GM10248 (cell line): ENCODE measurements at regions of chr22 and their contacts with region 1.

Region 1: DNA sequence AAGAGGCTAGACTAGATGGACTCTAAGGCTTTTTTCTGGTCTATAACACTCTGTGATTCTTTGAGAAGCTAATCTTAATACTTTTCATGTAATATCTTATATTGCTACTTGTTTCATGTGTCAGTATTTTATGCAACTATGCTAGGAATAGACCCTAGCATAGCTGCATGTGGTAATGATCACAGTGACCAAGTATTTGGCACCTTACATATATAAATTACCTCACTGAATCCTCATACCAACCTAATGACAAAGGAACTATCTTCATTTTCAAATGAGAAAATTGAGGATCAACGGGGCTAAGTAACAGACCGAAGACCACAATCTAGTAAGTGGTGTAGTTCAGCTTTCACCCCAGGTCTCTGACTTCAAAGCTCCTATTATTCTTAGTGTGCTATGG is 327.3 kb upstream of the PITPNB start:
- DNase-seq: no peak
- CTCF ChIP-seq: no peak

Region 2: DNA sequence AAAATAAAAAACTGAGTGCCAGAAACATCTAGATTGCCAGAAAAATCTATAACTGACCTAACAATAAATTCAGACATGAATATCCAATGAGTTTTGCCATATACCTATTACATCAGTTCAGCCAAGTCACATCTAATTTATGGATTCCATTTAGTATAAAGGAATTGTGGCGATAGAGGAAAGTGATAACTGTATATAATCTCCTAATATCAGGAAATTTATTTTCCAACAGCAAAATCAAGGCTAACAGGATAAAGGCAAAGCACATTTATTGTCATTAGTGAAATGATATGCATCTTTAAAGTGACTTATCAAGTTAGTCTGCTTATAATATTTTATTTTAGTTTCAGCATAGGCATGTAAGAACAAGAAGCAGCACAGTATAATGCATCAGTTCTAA is 29.1 kb before region 1 on chr22:
- CTCF ChIA-PET with region 1: no interaction called
- POLR2A ChIA-PET with region 1: no interaction called
- DNase-seq: no peak
- CTCF ChIP-seq: no peak

Region 3: DNA sequence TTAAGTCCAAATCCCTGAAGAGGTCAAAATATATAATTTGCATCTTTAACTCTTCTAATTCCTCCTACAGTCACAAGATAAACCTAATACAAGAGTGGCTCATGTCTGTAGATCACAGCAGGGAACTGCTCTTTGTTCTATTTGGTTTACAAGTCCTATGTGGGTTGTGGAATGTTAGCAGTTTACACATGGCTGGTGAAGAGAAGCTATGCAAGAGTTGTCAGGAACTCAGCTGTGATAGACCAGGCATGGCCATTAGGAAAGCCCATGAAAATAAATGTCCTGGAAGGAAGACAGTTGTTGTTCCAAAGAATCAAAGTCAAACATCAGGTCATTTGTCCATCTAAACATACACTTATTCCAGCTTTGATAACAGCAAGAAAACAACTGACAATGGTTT is 15.0 kb before region 1 on chr22:
- CTCF ChIA-PET with region 1: interaction called, 11 read pairs
- POLR2A ChIA-PET with region 1: no interaction called
- DNase-seq: no peak
- CTCF ChIP-seq: no peak